Activated CD4-positive, alpha-beta T cell treated with anti-CD3 and anti-CD28 coated beads for 36 hours (primary cell): ENCODE measurements at regions of chr1 and their contacts with region 1.

Region 1: DNA sequence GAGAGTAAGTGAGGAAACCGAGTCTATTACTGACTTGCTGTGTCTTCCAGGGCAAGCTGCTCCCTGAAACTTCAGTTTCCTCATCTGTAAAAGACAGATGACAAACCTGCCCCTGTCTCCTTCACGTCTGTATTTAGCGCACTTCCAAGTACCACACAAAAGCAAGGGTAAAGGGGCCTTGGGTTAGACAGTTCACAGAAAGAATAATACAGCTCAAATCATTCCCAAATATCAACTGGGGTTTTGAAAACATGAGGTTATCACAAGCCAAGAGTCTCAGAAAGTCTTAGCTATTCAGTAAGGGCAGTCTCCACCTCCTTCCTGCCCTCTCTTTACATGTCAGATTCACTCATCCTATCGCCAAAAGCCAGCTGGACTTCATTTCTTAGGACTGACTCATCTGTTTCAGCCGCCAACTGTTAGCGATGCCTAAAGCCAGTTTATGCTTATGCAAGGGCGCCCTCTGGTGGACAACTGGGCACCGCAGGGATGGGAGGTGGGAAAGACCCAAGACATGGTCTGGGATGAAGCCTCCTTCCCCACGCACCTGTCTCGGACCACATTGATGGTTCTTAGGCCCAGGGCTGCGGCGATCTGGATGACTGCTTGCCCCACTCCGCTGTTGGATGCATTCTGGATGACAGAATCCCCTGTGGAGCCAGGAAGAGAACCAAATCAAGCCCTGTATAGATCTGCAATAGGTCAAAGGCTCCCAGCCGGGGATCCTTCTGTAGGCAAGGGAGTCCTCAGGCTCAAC is 21.1 kb upstream of the SRSF4 start:
- DNase-seq: peak; percentile 96
- ATAC-seq: peak; percentile 95
- H3K4me3 Mint-ChIP-seq: no peak overlapping the region
- H3K27ac Mint-ChIP-seq: no peak overlapping the region
- H3K4me1 Mint-ChIP-seq: peaks cover 6% of the 10 kb centered on the region
- H3K27me3 Mint-ChIP-seq: no peaks in the 10 kb centered on the region

Region 2: GRCh38 chr1:29124366-29125236 is 78.2 kb before region 1 on chr1:
- CTCF ChIA-PET with region 1: interaction called, 22 read pairs
- POLR2A ChIA-PET with region 1: no interaction called
- intact Hi-C with region 1: loop called (anchors 1 to 5 kb)
- DNase-seq: peak; percentile 79
- ATAC-seq: peak; percentile 62
- H3K4me3 Mint-ChIP-seq: peak overlapping the region; percentile 65
- H3K27ac Mint-ChIP-seq: no peak overlapping the region
- H3K4me1 Mint-ChIP-seq: peaks cover 2% of the 10 kb centered on the region
- H3K27me3 Mint-ChIP-seq: peaks cover 12% of the 10 kb centered on the region

Region 3: GRCh38 chr1:29144178-29144577 is 58.6 kb before region 1 on chr1:
- CTCF ChIA-PET with region 1: no interaction called
- POLR2A ChIA-PET with region 1: no interaction called
- intact Hi-C with region 1: no loop called
- DNase-seq: no peak
- ATAC-seq: no peak
- H3K4me3 Mint-ChIP-seq: no peak overlapping the region
- H3K27ac Mint-ChIP-seq: no peak overlapping the region
- H3K4me1 Mint-ChIP-seq: no peaks in the 10 kb centered on the region
- H3K27me3 Mint-ChIP-seq: no peaks in the 10 kb centered on the region

Region 4: GRCh38 chr1:29221296-29221695 is 18.5 kb after region 1 on chr1:
- CTCF ChIA-PET with region 1: interaction called, 10 read pairs
- POLR2A ChIA-PET with region 1: no interaction called
- intact Hi-C with region 1: no loop called
- DNase-seq: no peak
- ATAC-seq: no peak
- H3K4me3 Mint-ChIP-seq: no peak overlapping the region
- H3K27ac Mint-ChIP-seq: no peak overlapping the region
- H3K4me1 Mint-ChIP-seq: no peaks in the 10 kb centered on the region
- H3K27me3 Mint-ChIP-seq: no peaks in the 10 kb centered on the region